HCT116 (cell line): ENCODE measurements at regions of chr1 and their contacts with region 1.

Region 1: GRCh38 chr1:62070384-62071011 is 124.2 kb upstream of the L1TD1 start:
- DNase-seq: no peak
- ATAC-seq: peak; percentile 49
- H3K4me3 ChIP-seq: no peak overlapping the region
- H3K27ac ChIP-seq: no peak overlapping the region
- H3K4me1 ChIP-seq: peaks cover 5% of the 10 kb centered on the region in 2 experiments; a peak in 2 of 4 replicates
- H3K27me3 ChIP-seq: no peaks in the 10 kb centered on the region
- CTCF ChIP-seq: peak; percentile 32 to 70 (median 54); a peak in 5 of 6 replicates
- POLR2A ChIP-seq: no peak
- RAD21 ChIP-seq: peak; percentile 54

Region 2: GRCh38 chr1:60169206-60169605 is 1901.3 kb before region 1 on chr1:
- CTCF ChIA-PET with region 1: no interaction called
- POLR2A ChIA-PET with region 1: no interaction called
- RAD21 ChIA-PET with region 1: no interaction called
- intact Hi-C with region 1: loop called (anchors 10 kb)
- DNase-seq: no peak
- ATAC-seq: no peak
- H3K4me3 ChIP-seq: no peak overlapping the region
- H3K27ac ChIP-seq: no peak overlapping the region
- H3K4me1 ChIP-seq: no peaks in the 10 kb centered on the region
- H3K27me3 ChIP-seq: peaks cover 11% of the 10 kb centered on the region
- CTCF ChIP-seq: no peak
- POLR2A ChIP-seq: no peak
- RAD21 ChIP-seq: no peak

Region 3: GRCh38 chr1:62131093-62131725 is 60.7 kb after region 1 on chr1:
- CTCF ChIA-PET with region 1: no interaction called
- POLR2A ChIA-PET with region 1: no interaction called
- RAD21 ChIA-PET with region 1: no interaction called
- intact Hi-C with region 1: no loop called
- DNase-seq: no peak
- ATAC-seq: peak; percentile 94
- H3K4me3 ChIP-seq: no peak overlapping the region
- H3K27ac ChIP-seq: no peak overlapping the region
- H3K4me1 ChIP-seq: peaks cover 0 to 12% of the 10 kb centered on the region in 2 experiments; a peak in 1 of 4 replicates
- H3K27me3 ChIP-seq: no peaks in the 10 kb centered on the region
- CTCF ChIP-seq: peak; percentile 34 to 61 (median 57); a peak in 5 of 6 replicates
- POLR2A ChIP-seq: no peak
- RAD21 ChIP-seq: peak; percentile 62

Region 4: DNA sequence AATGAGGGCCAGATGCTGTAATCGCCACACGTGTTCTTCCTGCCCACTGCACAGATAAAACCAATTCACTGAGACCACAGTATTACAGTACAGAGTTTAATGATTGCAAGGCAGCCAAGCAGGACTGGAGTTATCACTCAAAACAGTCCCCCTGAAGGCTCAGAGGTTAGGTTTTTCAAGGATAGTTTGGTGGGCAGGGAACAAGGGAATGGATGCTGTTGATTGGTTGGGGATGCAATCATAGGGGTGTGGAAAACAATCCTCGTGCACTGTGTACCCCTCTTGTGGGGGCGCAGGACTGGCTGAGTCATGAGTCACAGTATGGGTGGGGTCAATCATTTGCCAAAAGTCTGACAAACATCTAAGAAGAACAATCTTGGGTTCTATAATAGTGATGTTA is 353.9 kb after region 1 on chr1:
- CTCF ChIA-PET with region 1: no interaction called
- POLR2A ChIA-PET with region 1: no interaction called
- RAD21 ChIA-PET with region 1: no interaction called
- intact Hi-C with region 1: no loop called
- DNase-seq: no peak
- ATAC-seq: peak; percentile 79
- H3K4me3 ChIP-seq: no peak overlapping the region
- H3K27ac ChIP-seq: no peak overlapping the region
- H3K4me1 ChIP-seq: peaks cover 0 to 11% of the 10 kb centered on the region in 2 experiments; a peak in 3 of 4 replicates
- H3K27me3 ChIP-seq: no peaks in the 10 kb centered on the region
- CTCF ChIP-seq: no peak
- POLR2A ChIP-seq: no peak
- RAD21 ChIP-seq: no peak

Region 5: DNA sequence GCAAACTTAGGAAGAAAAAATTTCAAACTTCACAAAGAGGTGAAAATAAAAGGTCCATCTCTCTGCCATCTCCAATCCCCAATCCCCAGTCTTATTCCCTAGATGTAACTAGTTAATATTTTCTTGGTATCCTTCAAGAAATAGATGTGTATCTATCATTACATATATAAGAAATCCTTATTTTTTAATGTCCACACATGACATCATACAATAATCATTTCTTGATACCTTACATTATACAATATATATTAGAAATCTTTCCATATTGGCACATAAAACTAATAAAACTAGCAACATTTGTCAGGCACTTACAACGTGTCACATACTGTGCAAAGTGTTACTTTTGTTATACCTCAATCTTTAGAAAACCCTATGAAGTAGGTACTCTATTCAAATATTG is 601.5 kb after region 1 on chr1:
- CTCF ChIA-PET with region 1: no interaction called
- POLR2A ChIA-PET with region 1: no interaction called
- RAD21 ChIA-PET with region 1: no interaction called
- intact Hi-C with region 1: no loop called
- DNase-seq: no peak
- ATAC-seq: no peak
- H3K4me3 ChIP-seq: no peak overlapping the region
- H3K27ac ChIP-seq: no peak overlapping the region
- H3K4me1 ChIP-seq: no peaks in the 10 kb centered on the region
- H3K27me3 ChIP-seq: no peaks in the 10 kb centered on the region
- CTCF ChIP-seq: no peak
- POLR2A ChIP-seq: no peak
- RAD21 ChIP-seq: no peak